Activated CD4-positive, alpha-beta T cell treated with anti-CD3 and anti-CD28 coated beads for 36 hours (primary cell): ENCODE measurements at regions of chr9 and their contacts with region 1.

Region 1: DNA sequence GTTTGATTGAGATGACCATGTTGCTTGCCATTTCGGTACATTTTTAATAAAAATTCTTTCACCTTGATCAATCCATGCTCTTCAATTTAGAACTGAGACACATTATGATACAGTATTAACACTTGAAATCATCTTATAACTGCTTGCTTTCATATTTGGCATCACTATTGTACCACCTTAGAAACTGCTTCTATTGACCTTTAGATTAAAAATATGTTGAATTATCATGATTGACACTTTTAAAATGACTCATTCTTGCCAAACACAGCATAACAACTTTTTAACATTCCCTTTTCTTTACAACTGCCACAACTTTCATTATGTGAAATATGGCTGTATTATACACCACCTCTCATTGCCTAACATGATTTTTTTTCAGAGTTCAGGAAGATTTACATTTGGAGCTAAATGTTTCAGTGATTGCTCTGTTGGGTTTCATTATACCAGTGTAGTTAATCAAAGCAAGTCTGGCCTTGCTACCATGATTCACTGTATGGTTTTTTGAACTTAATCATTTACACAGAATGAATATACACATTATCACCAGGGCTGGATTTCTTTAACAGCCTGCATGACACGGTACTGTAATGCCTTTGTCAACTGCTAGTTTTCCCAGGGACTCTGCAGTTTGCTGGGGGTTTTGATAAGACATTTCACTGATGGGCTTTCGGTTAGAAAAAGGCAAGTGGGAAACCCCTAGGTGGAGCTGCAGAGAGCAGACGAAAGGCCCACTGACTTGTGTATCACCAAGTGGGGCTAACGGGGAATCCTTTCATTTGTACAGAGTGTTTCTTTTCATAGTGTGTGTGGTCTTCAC is 93.6 kb upstream of the TLE4 start:
- DNase-seq: peak; percentile 32
- ATAC-seq: peak; percentile 92
- H3K4me3 Mint-ChIP-seq: no peak overlapping the region
- H3K27ac Mint-ChIP-seq: peak overlapping the region; percentile 21
- H3K4me1 Mint-ChIP-seq: peaks cover 11% of the 10 kb centered on the region
- H3K27me3 Mint-ChIP-seq: no peaks in the 10 kb centered on the region

Region 2: DNA sequence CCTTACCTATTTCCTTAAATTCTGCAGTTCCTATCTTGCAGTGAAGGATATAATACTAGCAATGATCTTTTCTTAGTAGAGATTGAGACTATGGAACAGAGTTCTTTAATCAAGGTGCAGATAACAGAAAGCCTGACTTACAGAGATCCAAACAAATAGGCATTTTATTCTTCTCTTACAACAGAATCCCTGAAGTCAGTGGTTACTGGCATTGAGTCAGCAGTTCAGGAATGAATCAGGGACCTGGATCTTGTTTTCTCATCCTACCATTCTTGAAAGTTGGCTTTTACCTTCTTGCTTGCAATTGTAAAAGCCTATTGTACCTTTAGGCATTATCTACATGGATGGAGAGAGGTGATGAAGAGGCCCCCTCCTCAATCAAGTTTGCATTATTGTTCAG is 46.1 kb after region 1 on chr9:
- CTCF ChIA-PET with region 1: no interaction called
- POLR2A ChIA-PET with region 1: no interaction called
- intact Hi-C with region 1: no loop called
- DNase-seq: no peak
- ATAC-seq: no peak
- H3K4me3 Mint-ChIP-seq: no peak overlapping the region
- H3K27ac Mint-ChIP-seq: no peak overlapping the region
- H3K4me1 Mint-ChIP-seq: peaks cover 2% of the 10 kb centered on the region
- H3K27me3 Mint-ChIP-seq: no peaks in the 10 kb centered on the region

Region 3: DNA sequence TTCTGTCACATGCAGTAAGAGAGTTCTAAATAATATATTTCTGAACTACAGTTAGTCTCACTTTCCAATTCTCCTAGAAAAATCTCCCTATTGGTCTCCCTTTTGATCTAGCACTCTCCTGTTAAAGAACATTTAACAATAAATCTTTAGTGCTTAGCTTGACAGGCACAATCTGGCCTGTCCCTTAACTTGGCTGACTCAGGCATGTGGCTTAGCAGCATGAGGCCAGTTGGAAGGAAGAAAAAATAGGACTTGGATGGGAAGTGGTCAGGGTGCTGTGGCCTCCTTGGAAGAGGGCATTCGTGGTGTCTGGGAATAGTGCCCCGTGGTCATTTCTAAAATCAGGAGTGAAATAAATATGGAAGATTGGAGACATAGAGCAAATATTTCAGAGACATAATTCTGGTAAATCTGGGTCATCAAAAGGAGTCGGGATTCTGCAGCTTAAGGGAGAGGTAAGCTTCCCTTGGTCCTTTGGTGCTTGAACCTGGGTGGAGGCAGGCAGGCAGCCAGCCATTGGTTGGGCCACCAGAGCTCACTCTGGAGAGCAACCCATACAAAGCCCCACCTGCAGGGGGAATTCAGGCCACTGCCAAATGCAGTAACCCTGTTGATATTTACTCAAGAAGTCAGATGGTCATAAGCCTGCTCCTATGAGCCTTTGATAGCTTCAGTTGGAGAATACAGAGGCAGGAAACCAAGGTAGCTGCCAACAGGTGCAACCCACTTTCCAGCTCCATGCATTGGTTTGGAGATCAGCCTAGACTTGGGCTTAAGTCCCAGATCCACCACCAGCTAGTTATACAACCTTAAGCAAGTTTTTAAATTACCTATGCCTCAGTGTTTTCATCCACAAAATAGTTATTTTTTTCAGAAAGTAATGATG is 64.8 kb after region 1 on chr9:
- CTCF ChIA-PET with region 1: no interaction called
- POLR2A ChIA-PET with region 1: interaction called, 3 read pairs
- intact Hi-C with region 1: loop called in 1 of 2 experiments (anchors 5 kb)
- DNase-seq: peak; percentile 9
- ATAC-seq: no peak
- H3K4me3 Mint-ChIP-seq: no peak overlapping the region
- H3K27ac Mint-ChIP-seq: peak overlapping the region; percentile 34
- H3K4me1 Mint-ChIP-seq: peaks cover 24% of the 10 kb centered on the region
- H3K27me3 Mint-ChIP-seq: peaks cover 9% of the 10 kb centered on the region

Region 4: DNA sequence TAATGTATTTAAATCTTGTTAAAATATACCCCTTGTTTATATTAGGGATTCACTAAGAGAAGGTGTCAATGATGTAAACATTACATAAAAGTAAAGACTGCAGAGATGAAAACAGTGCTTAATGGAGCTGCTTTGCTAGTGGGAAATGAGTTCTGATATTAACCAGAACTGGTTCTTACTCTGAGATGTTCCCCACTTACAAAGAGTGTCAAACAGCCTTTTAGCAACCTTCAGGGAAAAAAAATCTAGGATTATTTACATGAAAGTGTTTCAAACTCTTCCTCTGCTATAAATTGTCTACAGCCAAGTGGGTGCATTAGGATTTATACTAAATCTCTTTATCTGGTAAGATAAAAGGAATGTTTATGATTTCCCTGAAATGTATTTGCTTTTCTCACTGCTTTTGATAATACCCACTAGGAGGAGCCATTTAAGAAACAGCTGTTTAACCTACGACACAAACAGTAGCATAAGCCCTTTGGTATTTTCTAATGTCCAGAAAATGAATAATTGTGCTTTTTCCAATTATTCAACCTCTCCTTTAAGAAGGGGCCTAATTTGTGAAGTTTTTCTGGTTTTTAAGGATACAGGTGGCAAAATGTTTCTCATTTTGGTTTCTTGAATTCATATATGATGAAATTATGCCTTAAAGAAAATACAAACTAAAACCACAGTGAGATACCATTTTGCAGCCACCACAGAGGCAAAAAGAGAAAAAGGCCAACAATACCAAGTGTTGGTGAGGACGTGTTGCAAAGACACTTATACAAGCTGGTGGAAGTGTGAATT is 279.9 kb after region 1 on chr9:
- CTCF ChIA-PET with region 1: no interaction called
- POLR2A ChIA-PET with region 1: no interaction called
- intact Hi-C with region 1: no loop called
- DNase-seq: no peak
- ATAC-seq: no peak
- H3K4me3 Mint-ChIP-seq: no peak overlapping the region
- H3K27ac Mint-ChIP-seq: no peak overlapping the region
- H3K4me1 Mint-ChIP-seq: peaks cover 5% of the 10 kb centered on the region
- H3K27me3 Mint-ChIP-seq: no peaks in the 10 kb centered on the region